K562 (cell line): ENCODE measurements at regions of chr22 and their contacts with region 1.

Region 1: DNA sequence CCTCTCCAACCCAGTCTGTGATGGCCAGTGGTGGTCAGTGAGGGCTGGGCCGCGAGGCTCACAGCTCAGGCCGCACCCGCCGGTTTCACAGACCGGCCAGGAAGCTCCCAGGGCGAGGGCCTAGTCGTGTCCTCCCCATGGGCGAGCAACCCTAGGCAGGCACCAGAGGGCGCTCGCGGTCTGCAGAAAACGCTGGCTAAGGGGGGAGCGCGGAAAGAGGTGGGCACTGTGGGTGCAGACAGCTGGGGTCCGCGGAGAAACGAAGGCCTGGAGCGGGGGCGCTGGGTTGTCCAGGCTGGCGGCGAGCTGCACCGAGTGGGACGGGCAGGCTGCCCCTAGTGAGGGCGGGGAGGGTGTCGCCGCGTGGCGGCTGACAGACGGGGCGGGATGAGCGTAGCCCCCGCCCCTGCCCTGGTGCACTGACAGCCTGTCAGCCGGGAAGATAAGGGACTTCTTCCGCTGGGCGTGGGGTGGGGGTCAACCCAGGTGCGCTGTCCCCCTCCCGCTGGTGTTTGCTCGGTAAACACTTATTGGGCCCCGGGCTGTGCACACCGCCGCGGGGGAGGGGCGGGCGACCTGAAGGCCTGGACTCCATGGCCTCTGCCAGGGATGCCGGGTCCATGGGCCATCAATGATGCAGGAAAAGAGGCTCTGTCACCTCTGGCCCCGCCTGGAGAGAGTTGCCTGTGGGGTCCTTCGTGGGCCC is 7.5 kb downstream of the GP1BB start:
- DNase-seq: peak; percentile 98 to 99 (median 98)
- ATAC-seq: peak; percentile 91
- H3K4me3 ChIP-seq: peak overlapping the region; percentile 45
- H3K27ac ChIP-seq: peak overlapping the region; percentile 6; the same call in 2 of the 3 replicates
- H3K4me1 ChIP-seq: peaks cover 11 to 63% of the 10 kb centered on the region in 2 experiments
- H3K27me3 ChIP-seq: peaks cover 0 to 21% of the 10 kb centered on the region in 2 experiments; a peak in 3 of 5 replicates
- CTCF ChIP-seq: peak; percentile 99 to 100 (median 100)
- EP300 ChIP-seq: peak; percentile 78
- POLR2A ChIP-seq: no peak; the same call in 1 of the 2 replicates
- RAD21 ChIP-seq: peak; percentile 100

Region 2: GRCh38 chr22:19745155-19746101 is 14.6 kb after region 1 on chr22:
- CTCF ChIA-PET with region 1: no interaction called
- POLR2A ChIA-PET with region 1: interaction called, 30 read pairs
- in situ Hi-C with region 1: no loop called
- intact Hi-C with region 1: no loop called
- DNase-seq: peak in 1 of 4 experiments; percentile 56
- ATAC-seq: peak; percentile 17
- H3K4me3 ChIP-seq: no peak overlapping the region
- H3K27ac ChIP-seq: no peak overlapping the region
- H3K4me1 ChIP-seq: peaks cover 5 to 68% of the 10 kb centered on the region in 2 experiments
- H3K27me3 ChIP-seq: peaks cover 20 to 61% of the 10 kb centered on the region in 2 experiments; a peak in 4 of 5 replicates
- CTCF ChIP-seq: no peak
- EP300 ChIP-seq: no peak
- POLR2A ChIP-seq: no peak
- RAD21 ChIP-seq: no peak

Region 3: GRCh38 chr22:19766511-19767426 is 36.0 kb after region 1 on chr22:
- CTCF ChIA-PET with region 1: interaction called, 3 read pairs
- POLR2A ChIA-PET with region 1: interaction called, 4 read pairs
- in situ Hi-C with region 1: no loop called
- intact Hi-C with region 1: loop called (anchors 2 kb)
- DNase-seq: peak; percentile 82 to 86 (median 84)
- ATAC-seq: peak; percentile 70
- H3K4me3 ChIP-seq: peak overlapping the region; percentile 34
- H3K27ac ChIP-seq: peak overlapping the region; percentile 46; the same call in 1 of the 3 replicates
- H3K4me1 ChIP-seq: peaks cover 6 to 89% of the 10 kb centered on the region in 2 experiments; a peak in 3 of 5 replicates
- H3K27me3 ChIP-seq: peaks cover 0 to 14% of the 10 kb centered on the region in 2 experiments; a peak in 2 of 5 replicates
- CTCF ChIP-seq: peak; percentile 71 to 79 (median 75)
- EP300 ChIP-seq: 0 out of 2 replicates have a peak, but pooled peaks have one; percentile 16
- POLR2A ChIP-seq: 0 out of 2 replicates have a peak, but pooled peaks have one; percentile 36
- RAD21 ChIP-seq: peak in 1 of 2 experiments; percentile 71; a peak in 2 of 4 replicates

Region 4: DNA sequence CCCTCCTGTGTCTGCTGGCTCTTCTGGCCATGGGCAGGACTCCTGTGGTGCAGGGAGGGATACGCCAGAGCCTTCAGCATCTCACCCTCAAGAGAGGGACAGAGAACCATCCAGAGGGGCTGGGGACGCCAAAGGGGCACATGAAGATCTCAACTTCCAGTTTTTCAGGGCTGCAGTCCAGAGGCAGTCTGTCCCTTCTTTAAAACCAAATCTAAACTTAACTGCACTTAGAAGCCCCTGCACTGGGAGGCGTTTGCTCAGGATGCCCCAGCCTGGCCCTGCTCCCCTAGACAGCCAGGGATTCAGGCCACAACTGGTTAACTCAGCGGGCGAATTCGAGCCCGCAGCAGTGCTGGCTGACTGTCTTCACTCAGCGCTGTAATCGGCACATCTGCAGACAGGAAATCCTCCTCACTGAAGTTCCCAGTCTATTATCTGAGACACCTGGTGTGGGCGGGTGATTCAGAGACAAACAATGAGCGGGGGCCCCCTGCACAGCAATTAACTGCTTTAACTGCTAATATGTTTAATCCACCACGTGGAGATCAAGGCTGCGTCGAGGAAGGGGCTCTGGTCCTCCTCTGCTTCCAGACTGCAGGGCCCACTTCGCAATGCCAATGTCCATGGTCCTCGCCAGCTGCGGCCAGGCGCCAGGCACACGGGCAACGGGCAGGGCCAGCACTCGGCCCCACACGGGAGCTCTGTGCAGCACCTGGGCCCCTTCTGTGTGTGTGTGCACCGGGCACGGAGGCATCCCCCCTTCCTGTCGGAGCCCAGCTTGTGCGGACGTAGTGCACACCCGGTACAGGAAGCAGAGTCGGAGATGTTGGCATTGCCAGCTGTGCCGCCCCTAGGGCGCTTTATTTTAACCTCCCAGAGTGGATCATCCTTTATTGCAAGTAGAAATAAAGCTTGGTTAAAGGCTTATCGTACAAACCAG is 160.8 kb after region 1 on chr22:
- CTCF ChIA-PET with region 1: no interaction called
- POLR2A ChIA-PET with region 1: interaction called, 7 read pairs
- in situ Hi-C with region 1: no loop called
- intact Hi-C with region 1: loop called (anchors 5 kb)
- DNase-seq: peak; percentile 98 to 99 (median 98)
- ATAC-seq: peak; percentile 92
- H3K4me3 ChIP-seq: no peak overlapping the region
- H3K27ac ChIP-seq: peak overlapping the region; percentile 46; the same call in 2 of the 3 replicates
- H3K4me1 ChIP-seq: peaks cover 24 to 62% of the 10 kb centered on the region in 2 experiments
- H3K27me3 ChIP-seq: no peaks in the 10 kb centered on the region
- CTCF ChIP-seq: peak in 2 of 3 experiments; percentile 9 to 33; a peak in 2 of 6 replicates
- EP300 ChIP-seq: peak; percentile 99
- POLR2A ChIP-seq: no peak; the same call in 1 of the 2 replicates
- RAD21 ChIP-seq: peak in 1 of 2 experiments; percentile 54; a peak in 2 of 4 replicates

Region 5: GRCh38 chr22:19909350-19910179 is 178.8 kb after region 1 on chr22:
- CTCF ChIA-PET with region 1: interaction called, 156 read pairs
- POLR2A ChIA-PET with region 1: interaction called, 58 read pairs
- in situ Hi-C with region 1: loop called (anchors 5 kb)
- intact Hi-C with region 1: loop called (anchors 1 kb)
- DNase-seq: peak; percentile 97 to 99 (median 98)
- ATAC-seq: peak; percentile 97
- H3K4me3 ChIP-seq: no peak overlapping the region
- H3K27ac ChIP-seq: peak overlapping the region; percentile 16; the same call in 1 of the 3 replicates
- H3K4me1 ChIP-seq: peaks cover 2 to 28% of the 10 kb centered on the region in 2 experiments; a peak in 4 of 5 replicates
- H3K27me3 ChIP-seq: no peaks in the 10 kb centered on the region; a peak in 1 of 5 replicates
- CTCF ChIP-seq: peak; percentile 98 to 100 (median 100)
- EP300 ChIP-seq: peak; percentile 51
- POLR2A ChIP-seq: peak; percentile 25; the same call in 1 of the 2 replicates
- RAD21 ChIP-seq: peak; percentile 100

Region 6: DNA sequence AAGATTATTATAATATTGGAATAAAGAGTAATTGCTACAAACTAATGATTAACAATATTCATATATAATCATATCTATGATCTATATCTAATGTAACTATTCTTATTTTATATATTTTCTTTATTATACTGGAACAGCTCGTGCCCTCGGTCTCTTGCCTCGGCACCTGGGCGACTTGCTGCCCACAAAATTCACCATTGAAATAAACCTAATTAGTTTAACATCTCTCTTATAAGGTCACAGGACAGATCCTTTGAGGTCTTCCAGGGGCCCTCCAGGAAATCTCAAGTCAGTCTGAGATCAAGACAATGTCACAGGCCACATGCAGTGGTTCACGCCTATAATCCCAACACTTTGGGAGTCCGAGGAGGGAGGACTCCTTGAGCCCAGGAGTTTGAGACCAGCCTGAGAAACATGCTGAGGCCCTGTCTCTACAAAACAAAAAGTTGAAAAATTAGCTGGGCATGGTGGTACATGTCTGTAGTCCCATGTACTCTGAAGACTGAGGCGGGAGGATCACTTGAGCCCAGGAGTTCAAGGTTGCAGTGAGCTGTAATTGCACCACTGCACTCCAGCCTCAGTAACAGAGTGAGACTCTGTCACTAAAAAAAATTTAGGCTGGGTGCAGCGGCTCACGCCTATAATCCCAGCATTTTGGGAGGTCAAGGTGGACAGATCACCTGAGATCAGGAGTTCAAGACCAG is 217.4 kb after region 1 on chr22:
- CTCF ChIA-PET with region 1: interaction called, 21 read pairs
- POLR2A ChIA-PET with region 1: interaction called, 8 read pairs
- in situ Hi-C with region 1: no loop called
- intact Hi-C with region 1: loop called (anchors 2 kb)
- DNase-seq: no peak
- ATAC-seq: no peak
- H3K4me3 ChIP-seq: no peak overlapping the region
- H3K27ac ChIP-seq: peak overlapping the region; percentile 92; the same call in 2 of the 3 replicates
- H3K4me1 ChIP-seq: peaks cover 28 to 30% of the 10 kb centered on the region in 2 experiments
- H3K27me3 ChIP-seq: no peaks in the 10 kb centered on the region
- CTCF ChIP-seq: no peak
- EP300 ChIP-seq: no peak
- POLR2A ChIP-seq: no peak
- RAD21 ChIP-seq: no peak

Region 7: DNA sequence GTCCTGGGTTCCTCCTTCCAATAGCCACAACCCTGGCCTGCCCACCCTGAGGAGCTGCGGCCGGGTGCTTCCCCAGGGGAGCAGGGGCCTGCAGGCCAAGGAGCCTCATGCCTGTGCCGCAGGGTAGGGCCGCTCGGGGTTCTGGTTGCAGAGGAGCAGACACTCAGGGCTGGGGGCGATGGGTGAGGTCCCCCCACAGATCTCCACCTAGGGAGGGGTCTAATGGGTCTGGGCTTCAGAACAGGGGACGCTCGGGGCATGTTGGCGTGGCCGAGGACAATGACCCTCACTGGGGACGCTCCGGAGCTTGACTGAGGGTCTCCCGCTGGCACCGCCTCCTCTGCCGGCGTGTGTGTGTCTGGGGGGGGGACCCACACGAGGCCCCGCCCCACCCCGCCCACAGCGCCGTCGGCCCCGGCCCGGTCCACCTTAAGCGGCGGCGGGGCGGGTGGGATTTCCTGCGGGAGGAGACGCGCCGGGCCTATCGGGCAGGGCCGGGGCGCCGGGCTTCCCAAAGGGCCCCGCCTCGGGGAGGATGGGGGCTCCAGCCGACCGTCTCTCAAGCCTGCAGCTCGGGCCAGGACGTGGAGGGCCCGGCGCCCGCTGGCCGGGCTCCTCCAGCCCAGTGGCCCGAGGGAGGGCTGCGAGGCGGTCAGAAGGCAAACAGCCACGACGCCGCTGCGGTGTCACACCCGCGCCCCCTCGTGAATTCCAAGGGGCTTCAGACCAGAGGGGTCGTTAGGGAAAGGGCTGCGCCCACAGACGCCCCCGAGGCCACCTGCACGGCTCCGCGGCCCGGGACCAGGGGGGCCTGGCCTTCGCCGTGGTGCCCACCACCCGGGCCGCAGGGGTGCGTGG is 400.2 kb after region 1 on chr22:
- CTCF ChIA-PET with region 1: interaction called, 9 read pairs
- POLR2A ChIA-PET with region 1: no interaction called
- in situ Hi-C with region 1: no loop called
- intact Hi-C with region 1: loop called (anchors 1 kb)
- DNase-seq: peak; percentile 95 to 100 (median 98)
- ATAC-seq: peak; percentile 79
- H3K4me3 ChIP-seq: peak overlapping the region; percentile 62
- H3K27ac ChIP-seq: peak overlapping the region; percentile 20; the same call in 2 of the 3 replicates
- H3K4me1 ChIP-seq: peaks cover 11 to 79% of the 10 kb centered on the region in 2 experiments
- H3K27me3 ChIP-seq: no peaks in the 10 kb centered on the region
- CTCF ChIP-seq: no peak
- EP300 ChIP-seq: no peak
- POLR2A ChIP-seq: no peak
- RAD21 ChIP-seq: no peak